HAP-1 (cell line): ENCODE measurements at regions of chr3 and their contacts with region 1.

Region 1: DNA sequence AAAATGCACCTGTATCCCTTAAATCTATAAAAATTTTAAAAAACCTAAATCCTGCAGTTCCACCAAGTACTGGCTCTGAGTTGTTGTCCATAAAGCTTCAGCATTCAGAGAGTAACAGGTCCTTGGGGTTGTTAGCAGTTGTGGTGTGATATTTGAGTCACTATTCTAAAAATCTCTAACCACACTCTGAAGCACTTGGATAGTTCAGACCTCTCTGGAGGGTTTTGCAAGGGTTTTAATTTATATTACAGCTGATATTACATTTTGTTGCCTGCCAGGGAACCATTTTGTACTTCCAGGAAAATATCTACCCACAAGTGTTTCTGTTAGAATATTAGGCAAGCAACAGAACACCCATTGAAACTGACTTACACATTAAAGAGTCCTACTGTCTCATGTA is 255.6 kb downstream of the TBL1XR1 start:
- DNase-seq: no peak
- H3K4me3 ChIP-seq: no peak overlapping the region
- H3K4me1 ChIP-seq: no peaks in the 10 kb centered on the region
- H3K27me3 ChIP-seq: no peaks in the 10 kb centered on the region

Region 2: DNA sequence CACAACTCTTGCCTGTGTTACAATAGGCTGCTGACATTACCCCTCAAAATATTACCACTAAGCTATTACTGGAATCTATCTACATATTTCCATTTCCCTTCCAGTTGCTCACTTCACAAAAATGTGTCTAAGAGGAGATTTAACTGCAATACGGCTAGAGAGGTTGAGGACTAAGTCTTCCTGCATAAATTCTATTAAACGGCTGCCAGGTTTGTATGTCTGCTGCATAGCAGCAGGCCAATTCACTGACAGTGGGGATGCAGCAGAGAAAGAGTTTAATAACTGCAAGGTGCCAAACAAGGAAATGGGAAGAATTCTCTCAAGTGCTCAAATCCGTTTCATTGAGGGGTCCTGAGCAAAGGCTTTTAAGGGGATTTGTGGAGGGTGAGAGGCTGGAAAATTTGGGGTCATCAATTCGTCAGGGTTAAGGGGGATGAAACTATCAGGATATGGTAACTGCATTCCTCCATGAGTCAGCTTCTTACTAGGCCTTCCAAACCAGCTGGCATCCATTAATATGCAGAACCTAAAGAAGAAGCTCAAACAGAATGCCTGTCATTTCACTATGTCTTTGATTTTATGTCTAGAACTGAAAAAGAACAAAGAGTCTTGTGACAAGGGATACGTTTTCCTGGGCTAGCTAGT is 420.0 kb before region 1 on chr3:
- in situ Hi-C with region 1: loop called (anchors 10 kb)
- DNase-seq: no peak
- H3K4me3 ChIP-seq: no peak overlapping the region
- H3K4me1 ChIP-seq: no peaks in the 10 kb centered on the region
- H3K27me3 ChIP-seq: no peaks in the 10 kb centered on the region; the same call in 1 of the 2 replicates

Region 3: GRCh38 chr3:176759815-176760506 is 181.7 kb before region 1 on chr3:
- in situ Hi-C with region 1: no loop called
- DNase-seq: no peak
- H3K4me3 ChIP-seq: no peak overlapping the region
- H3K4me1 ChIP-seq: no peaks in the 10 kb centered on the region
- H3K27me3 ChIP-seq: no peaks in the 10 kb centered on the region